Mucosa of descending colon (tissue), 3 donors: ENCODE measurements at regions of chr10 and their contacts with region 1.

Region 1: DNA sequence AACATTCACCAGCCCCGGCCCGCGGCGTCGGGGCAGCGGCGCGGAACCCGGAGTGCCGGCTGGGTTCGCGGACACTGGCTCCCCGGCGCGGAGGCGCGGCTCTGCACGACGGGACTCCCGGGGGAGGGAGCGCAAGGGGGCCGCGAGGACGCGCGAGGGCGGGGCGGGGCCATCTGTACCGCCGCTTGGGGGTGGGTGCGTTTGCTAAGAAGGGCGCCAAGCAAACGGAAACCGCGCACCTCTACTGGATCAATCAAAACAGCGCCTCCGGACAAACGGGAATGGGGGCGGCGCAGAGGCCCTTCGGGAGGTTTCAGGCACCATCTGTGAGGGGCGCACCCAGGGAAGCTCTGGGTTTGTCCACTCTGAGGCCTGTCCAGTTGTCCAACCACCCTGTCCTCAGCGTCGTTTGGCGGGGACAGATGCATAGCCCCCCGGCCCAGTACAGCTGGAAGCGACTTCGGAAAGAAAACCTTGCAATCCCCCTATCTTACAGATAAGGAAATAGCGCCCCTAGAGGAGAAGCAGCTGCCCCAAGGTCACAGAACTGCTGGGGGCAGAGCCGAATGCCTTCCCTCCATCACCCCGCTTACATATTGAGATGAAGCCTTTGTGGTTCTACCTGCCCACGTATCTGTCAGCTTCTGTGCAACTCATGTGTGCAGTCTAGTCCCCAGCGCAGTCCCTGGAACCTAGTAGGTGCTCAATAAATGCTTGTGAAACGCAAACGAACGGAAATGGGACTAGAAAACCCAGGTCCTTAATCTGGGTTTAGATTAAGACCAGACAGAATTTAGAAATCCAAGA is 10.7 kb upstream of the SLIT1 start:
- DNase-seq: peak; percentile 53 to 67 (median 58)
- ATAC-seq: peak; percentile 73
- H3K4me3 ChIP-seq: no peak overlapping the region
- H3K4me1 ChIP-seq: peaks cover 6% of the 10 kb centered on the region
- CTCF ChIP-seq: peak; percentile 53

Region 2: DNA sequence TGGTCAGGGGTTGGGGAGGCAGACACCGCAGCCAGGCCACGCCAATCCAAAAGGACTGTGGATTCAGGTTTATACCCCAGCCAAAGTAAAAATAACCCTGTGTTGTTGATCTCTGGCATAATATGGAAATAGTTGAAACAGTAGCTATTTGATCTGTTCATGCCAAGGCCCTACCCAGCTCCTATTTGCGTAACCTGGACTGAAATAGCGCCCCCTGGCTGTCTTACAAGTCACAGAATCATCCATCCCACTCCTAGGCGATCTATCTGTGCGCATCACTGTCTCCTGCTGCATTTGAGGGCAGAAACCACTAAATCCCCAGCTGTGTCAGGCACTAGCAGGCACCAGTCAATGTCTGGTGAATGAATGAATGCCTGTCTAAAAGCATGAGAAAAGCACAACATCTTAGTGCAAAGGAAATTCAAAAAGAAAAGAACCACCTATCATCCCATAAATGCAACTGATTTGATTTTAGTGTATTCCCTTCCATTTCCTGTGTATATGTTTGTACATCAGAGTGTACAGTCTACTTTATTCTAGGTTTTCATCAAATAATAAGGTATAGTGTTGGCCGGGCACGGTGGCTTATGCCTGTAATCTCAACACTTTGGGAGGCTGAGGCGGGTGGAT is 170.7 kb before region 1 on chr10:
- intact Hi-C with region 1: no loop called
- DNase-seq: peak in 1 of 3 donors; percentile 86
- ATAC-seq: peak; percentile 87
- H3K4me3 ChIP-seq: no peak overlapping the region
- H3K4me1 ChIP-seq: peaks cover 3% of the 10 kb centered on the region
- CTCF ChIP-seq: peak; percentile 36

Region 3: DNA sequence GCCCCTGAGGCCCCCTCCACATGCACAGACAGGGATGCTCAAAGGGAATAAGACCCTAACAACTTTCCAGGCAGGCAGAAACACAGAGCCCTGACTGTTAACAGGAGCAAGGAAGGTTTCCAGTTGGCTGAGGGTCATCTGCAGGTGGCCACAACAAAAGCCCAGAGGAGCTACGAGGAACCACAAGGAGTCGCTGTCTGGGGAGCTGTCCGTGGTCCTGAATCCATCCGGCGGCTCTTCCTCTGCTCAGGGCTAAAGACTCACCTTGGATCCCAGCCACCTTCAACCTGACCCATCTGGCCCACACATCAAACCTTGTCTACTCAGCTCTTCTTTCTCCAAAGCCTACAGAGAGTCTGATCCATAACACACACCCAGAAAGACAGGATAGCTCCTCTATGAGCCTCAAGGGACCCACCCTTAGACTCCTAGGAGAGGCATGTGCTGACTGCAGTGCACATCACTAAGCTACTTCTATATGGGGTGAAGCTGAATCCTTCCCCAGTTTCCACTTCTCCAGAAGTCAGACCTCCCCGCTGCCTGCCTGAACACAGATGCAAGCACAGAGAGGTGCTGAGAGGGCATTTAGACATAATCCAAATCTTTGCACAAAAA is 114.7 kb before region 1 on chr10:
- intact Hi-C with region 1: loop called in 1 of 2 experiments (anchors 5 kb)
- DNase-seq: peak in 2 of 3 donors; percentile 68 to 74
- ATAC-seq: peak; percentile 81
- H3K4me3 ChIP-seq: no peak overlapping the region
- H3K4me1 ChIP-seq: no peaks in the 10 kb centered on the region
- CTCF ChIP-seq: no peak

Region 4: GRCh38 chr10:97159646-97160305 is 36.6 kb before region 1 on chr10:
- intact Hi-C with region 1: loop called in 1 of 2 experiments (anchors 2 kb)
- DNase-seq: no peak
- ATAC-seq: no peak
- H3K4me3 ChIP-seq: no peak overlapping the region
- H3K4me1 ChIP-seq: no peaks in the 10 kb centered on the region
- CTCF ChIP-seq: no peak

Region 5: DNA sequence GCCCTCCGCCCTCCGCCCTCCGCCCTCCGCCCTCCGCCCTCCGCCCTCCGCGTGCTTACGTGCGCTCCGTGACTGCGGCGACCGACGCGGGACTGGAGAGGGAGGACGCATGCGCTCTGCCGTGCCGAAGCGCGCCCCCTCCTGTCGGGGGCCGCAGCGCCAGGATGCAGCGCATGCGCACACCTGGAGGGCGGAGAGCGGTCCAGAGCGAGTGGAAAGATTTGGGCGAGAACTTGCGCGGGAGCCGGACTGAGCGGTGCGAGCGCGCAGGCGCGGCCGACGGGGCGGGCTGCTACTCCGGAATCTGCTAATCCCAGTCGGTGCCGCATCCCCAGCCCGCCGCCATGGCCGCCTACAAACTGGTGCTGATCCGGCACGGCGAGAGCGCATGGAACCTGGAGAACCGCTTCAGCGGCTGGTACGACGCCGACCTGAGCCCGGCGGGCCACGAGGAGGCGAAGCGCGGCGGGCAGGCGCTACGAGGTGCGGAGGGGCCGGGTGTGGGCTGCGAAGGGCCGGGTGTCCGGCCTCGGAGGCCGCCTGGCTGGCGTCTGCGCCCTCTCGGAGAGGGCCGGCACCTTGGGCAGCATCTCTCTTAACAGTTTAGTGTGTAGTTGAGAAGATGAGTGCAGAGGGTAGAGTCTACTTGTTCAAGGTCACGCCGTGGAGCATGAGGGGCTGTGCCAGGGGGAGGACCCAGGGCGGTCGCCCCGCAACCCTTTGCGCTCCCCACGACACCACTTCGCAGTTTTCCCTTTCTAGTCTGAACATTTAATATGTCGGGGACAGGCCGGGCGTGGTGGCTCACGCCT is 229.7 kb after region 1 on chr10 and contains the start of gene PGAM1:
- intact Hi-C with region 1: no loop called
- DNase-seq: peak; percentile 91 to 97 (median 97)
- ATAC-seq: peak; percentile 92
- H3K4me3 ChIP-seq: peak within 1 kb of the TSS; percentile 83
- H3K4me1 ChIP-seq: peaks cover 25% of the 10 kb centered on the region
- CTCF ChIP-seq: peak; percentile 80
- total RNA-seq, gene PGAM1: 173 to 244 (median 186) TPM